ENCODE measurements at regions of chr4 and their contacts with region 1.

Region 1: DNA sequence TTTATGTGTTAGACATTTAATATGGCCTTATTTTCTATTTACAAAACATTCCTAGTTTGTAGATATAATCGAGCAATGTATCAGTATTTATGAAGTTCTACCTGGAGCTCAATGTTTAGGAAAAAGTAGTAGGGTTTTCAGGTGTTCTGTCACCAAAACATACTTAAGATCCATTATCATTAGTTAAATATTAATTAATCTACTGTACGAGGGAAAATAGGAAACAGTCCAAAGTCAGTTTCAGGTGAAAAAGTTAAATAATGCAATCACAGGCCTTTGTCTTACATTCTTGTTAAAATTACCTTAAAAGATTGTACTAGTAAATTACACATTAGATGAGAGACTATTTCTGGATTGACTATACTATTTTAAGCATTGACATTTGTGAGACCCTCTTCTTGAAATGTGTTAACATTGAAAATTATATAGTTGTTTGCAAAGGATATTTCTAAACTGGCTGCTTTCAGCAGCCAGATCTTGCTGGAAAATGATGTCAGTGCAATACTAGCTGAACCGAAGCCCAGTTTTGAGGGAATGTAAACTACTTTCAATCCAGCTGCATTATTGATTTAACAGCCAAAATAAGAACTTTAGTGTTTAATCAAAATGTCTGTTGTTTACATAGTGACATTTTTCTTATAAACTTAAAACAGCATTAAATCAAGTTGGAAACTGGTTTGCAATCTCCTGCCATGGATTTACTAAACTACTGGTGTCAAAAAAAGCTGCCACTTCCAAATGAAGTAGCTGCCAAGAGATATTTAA is 19.3 kb downstream of the GUCY1B1 start:
- DNase-seq: peak; percentile 42
- ATAC-seq: peak; percentile 82
- H3K4me3 ChIP-seq: no peak overlapping the region
- H3K27ac ChIP-seq: 0 out of 2 replicates have a peak overlapping the region, but pooled peaks have one; percentile 14
- H3K4me1 ChIP-seq: peaks cover 25% of the 10 kb centered on the region
- H3K27me3 ChIP-seq: no peaks in the 10 kb centered on the region
- CTCF ChIP-seq: no peak

Region 2: GRCh38 chr4:155529272-155529671 is 248.9 kb before region 1 on chr4:
- CTCF ChIA-PET with region 1: no interaction called
- POLR2A ChIA-PET with region 1: no interaction called
- intact Hi-C with region 1: loop called (anchors 5 kb)
- DNase-seq: peak; percentile 44
- ATAC-seq: no peak
- H3K4me3 ChIP-seq: peak overlapping the region; percentile 14; the same call in 1 of the 2 replicates
- H3K27ac ChIP-seq: peak overlapping the region; percentile 96
- H3K4me1 ChIP-seq: peaks cover 38% of the 10 kb centered on the region
- H3K27me3 ChIP-seq: no peaks in the 10 kb centered on the region
- CTCF ChIP-seq: peak; percentile 68

Region 3: GRCh38 chr4:155675709-155676429 is 102.3 kb before region 1 on chr4:
- CTCF ChIA-PET with region 1: no interaction called
- POLR2A ChIA-PET with region 1: no interaction called
- intact Hi-C with region 1: loop called (anchors 5 kb)
- DNase-seq: peak; percentile 46
- ATAC-seq: no peak
- H3K4me3 ChIP-seq: no peak overlapping the region
- H3K27ac ChIP-seq: peak overlapping the region; percentile 23; the same call in 1 of the 2 replicates
- H3K4me1 ChIP-seq: peaks cover 48% of the 10 kb centered on the region
- H3K27me3 ChIP-seq: no peaks in the 10 kb centered on the region
- CTCF ChIP-seq: no peak

Region 4: GRCh38 chr4:155900381-155900780 is 122.2 kb after region 1 on chr4:
- CTCF ChIA-PET with region 1: no interaction called
- POLR2A ChIA-PET with region 1: no interaction called
- intact Hi-C with region 1: no loop called
- DNase-seq: peak; percentile 68
- ATAC-seq: peak; percentile 87
- H3K4me3 ChIP-seq: no peak overlapping the region
- H3K27ac ChIP-seq: peak overlapping the region; percentile 45
- H3K4me1 ChIP-seq: peaks cover 14% of the 10 kb centered on the region
- H3K27me3 ChIP-seq: no peaks in the 10 kb centered on the region
- CTCF ChIP-seq: no peak

Measured in PC-3 (cell line).